GM12878 (cell line): ENCODE measurements at regions of chr2 and their contacts with region 1.

Region 1: DNA sequence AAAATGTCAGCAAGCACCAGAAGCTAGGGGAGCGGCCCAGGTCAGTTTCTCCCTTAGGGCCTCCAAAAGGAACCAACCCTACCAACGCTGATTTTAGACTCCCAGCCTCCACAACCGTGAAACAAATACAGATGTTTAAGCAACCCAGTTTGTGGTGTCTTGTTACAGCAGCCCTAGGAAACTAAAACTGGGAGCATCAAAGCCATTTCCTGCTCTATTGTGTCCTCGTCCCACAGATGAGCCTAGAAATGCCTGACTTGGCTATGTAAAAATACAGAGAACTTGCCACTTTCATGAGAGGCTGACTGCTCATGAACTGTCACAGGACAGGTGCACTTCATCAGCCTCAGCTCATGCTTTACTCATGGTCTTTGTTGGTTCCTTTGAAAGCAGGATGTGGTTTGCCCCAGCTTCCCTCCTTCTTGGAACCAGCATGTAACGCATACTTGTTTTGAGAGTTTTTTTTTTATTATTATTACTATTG is 97.6 kb upstream of the SLC39A10 start:
- DNase-seq: peak; percentile 99
- ATAC-seq: peak; percentile 72
- H3K4me3 ChIP-seq: 0 out of 2 replicates have a peak overlapping the region, but pooled peaks have one; percentile 6
- H3K27ac ChIP-seq: peak overlapping the region; percentile 94
- H3K4me1 ChIP-seq: peaks cover 39% of the 10 kb centered on the region
- H3K27me3 ChIP-seq: no peaks in the 10 kb centered on the region
- CTCF ChIP-seq: no peak
- EP300 ChIP-seq: peak; percentile 88 to 97
- POLR2A ChIP-seq: no peak
- RAD21 ChIP-seq: 0 out of 2 replicates have a peak, but pooled peaks have one; percentile 15

Region 2: GRCh38 chr2:195337597-195337996 is 221.9 kb before region 1 on chr2:
- CTCF ChIA-PET with region 1: interaction called, 5 read pairs
- POLR2A ChIA-PET with region 1: no interaction called
- RAD21 ChIA-PET with region 1: no interaction called
- SMC1A ChIA-PET with region 1: no interaction called
- in situ Hi-C with region 1: no loop called
- intact Hi-C with region 1: loop called (anchors 10 kb)
- DNase-seq: no peak
- ATAC-seq: peak; percentile 56
- H3K4me3 ChIP-seq: no peak overlapping the region
- H3K27ac ChIP-seq: no peak overlapping the region
- H3K4me1 ChIP-seq: no peaks in the 10 kb centered on the region
- H3K27me3 ChIP-seq: no peaks in the 10 kb centered on the region
- CTCF ChIP-seq: no peak
- EP300 ChIP-seq: no peak
- POLR2A ChIP-seq: no peak
- RAD21 ChIP-seq: no peak

Region 3: GRCh38 chr2:195498176-195498575 is 61.3 kb before region 1 on chr2:
- CTCF ChIA-PET with region 1: interaction called, 22 read pairs
- POLR2A ChIA-PET with region 1: interaction called, 7 read pairs
- RAD21 ChIA-PET with region 1: interaction called, 45 read pairs
- SMC1A ChIA-PET with region 1: interaction called, 62 read pairs
- in situ Hi-C with region 1: no loop called
- intact Hi-C with region 1: no loop called
- DNase-seq: no peak
- ATAC-seq: peak; percentile 78
- H3K4me3 ChIP-seq: no peak overlapping the region
- H3K27ac ChIP-seq: no peak overlapping the region
- H3K4me1 ChIP-seq: no peaks in the 10 kb centered on the region
- H3K27me3 ChIP-seq: no peaks in the 10 kb centered on the region
- CTCF ChIP-seq: peak; percentile 33 to 56 (median 44)
- EP300 ChIP-seq: no peak
- POLR2A ChIP-seq: no peak
- RAD21 ChIP-seq: peak; percentile 70

Region 4: GRCh38 chr2:195513119-195513518 is 46.4 kb before region 1 on chr2:
- CTCF ChIA-PET with region 1: no interaction called
- POLR2A ChIA-PET with region 1: no interaction called
- RAD21 ChIA-PET with region 1: interaction called, 3 read pairs
- SMC1A ChIA-PET with region 1: interaction called, 22 read pairs
- in situ Hi-C with region 1: loop called (anchors 5 kb)
- intact Hi-C with region 1: no loop called
- DNase-seq: no peak
- ATAC-seq: no peak
- H3K4me3 ChIP-seq: no peak overlapping the region
- H3K27ac ChIP-seq: no peak overlapping the region
- H3K4me1 ChIP-seq: no peaks in the 10 kb centered on the region
- H3K27me3 ChIP-seq: no peaks in the 10 kb centered on the region
- CTCF ChIP-seq: no peak
- EP300 ChIP-seq: no peak
- POLR2A ChIP-seq: no peak
- RAD21 ChIP-seq: no peak

Region 5: GRCh38 chr2:195649629-195650190 is 90.2 kb after region 1 on chr2:
- CTCF ChIA-PET with region 1: interaction called, 3 read pairs
- POLR2A ChIA-PET with region 1: interaction called, 19 read pairs
- RAD21 ChIA-PET with region 1: interaction called, 49 read pairs
- SMC1A ChIA-PET with region 1: interaction called, 47 read pairs
- in situ Hi-C with region 1: no loop called
- intact Hi-C with region 1: no loop called
- DNase-seq: no peak
- ATAC-seq: peak; percentile 47
- H3K4me3 ChIP-seq: peak overlapping the region; percentile 17; the same call in 1 of the 2 replicates
- H3K27ac ChIP-seq: peak overlapping the region; percentile 80
- H3K4me1 ChIP-seq: peaks cover 20% of the 10 kb centered on the region
- H3K27me3 ChIP-seq: no peaks in the 10 kb centered on the region
- CTCF ChIP-seq: no peak
- EP300 ChIP-seq: no peak; a peak in 1 of 4 replicates
- POLR2A ChIP-seq: no peak
- RAD21 ChIP-seq: no peak